ENCODE measurements at regions of chr17 and their contacts with region 1.

Region 1: GRCh38 chr17:50139950-50140871 is 10.3 kb upstream of the SAMD14 start:
- DNase-seq: peak; percentile 81 to 90
- H3K4me3 ChIP-seq: no peak overlapping the region
- H3K27ac ChIP-seq: peak overlapping the region in 3 of 5 donors; percentile 16 to 60 (median 43)
- H3K4me1 ChIP-seq: peaks cover 9 to 51% (median 33%) of the 10 kb centered on the region in 4 donors
- H3K27me3 ChIP-seq: no peaks in the 10 kb centered on the region
- CTCF ChIP-seq: peak in 6 of 7 experiments; percentile 75 to 97 (median 96)
- EP300 ChIP-seq: no peak
- POLR2A ChIP-seq: no peak

Region 2: GRCh38 chr17:50107790-50108414 is 32.3 kb before region 1 on chr17:
- intact Hi-C with region 1: loop called (anchors 5 kb)
- DNase-seq: no peak
- H3K4me3 ChIP-seq: no peak overlapping the region
- H3K27ac ChIP-seq: no peak overlapping the region
- H3K4me1 ChIP-seq: peaks cover 18 to 36% (median 24%) of the 10 kb centered on the region in 4 donors
- H3K27me3 ChIP-seq: no peaks in the 10 kb centered on the region
- CTCF ChIP-seq: no peak
- EP300 ChIP-seq: no peak
- POLR2A ChIP-seq: no peak